Activated B cell treated with CpG ODN at 0.5 μM for 24 hours (primary cell): ENCODE measurements at regions of chr2 and their contacts with region 1.

Region 1: DNA sequence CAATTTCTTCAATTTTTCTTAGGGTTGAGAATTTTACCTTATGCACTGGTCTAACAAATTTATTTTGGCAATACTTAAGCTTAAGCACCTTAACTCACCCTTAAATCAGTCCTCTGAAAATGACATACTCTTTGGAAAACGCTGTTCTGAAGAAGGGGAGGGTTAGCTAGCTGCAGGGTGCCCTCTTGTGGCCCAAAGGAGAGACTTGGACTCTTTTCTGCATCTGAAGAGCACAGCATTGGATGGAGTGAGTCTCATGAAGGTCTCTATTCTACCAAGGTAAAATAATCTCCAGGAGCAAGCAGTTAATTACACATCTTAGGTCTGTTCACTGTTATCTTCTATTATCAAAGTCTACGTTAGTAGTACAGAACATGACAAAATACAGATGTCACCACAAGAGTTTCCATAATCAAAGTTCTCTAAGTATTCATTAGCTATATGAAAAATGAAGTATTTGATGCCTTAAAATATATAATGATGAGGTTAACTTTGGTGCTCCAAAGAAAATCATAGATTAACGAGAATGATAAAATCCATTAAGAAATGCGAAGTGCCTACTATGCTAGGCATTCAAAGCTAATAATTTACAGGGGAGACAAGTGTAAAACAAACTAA is 24.4 kb downstream of the PUM2 start:
- DNase-seq: no peak
- ATAC-seq: peak; percentile 66
- H3K4me3 Mint-ChIP-seq: no peak overlapping the region
- H3K27ac Mint-ChIP-seq: peak overlapping the region; percentile 19
- H3K4me1 Mint-ChIP-seq: peaks cover 63% of the 10 kb centered on the region
- H3K27me3 Mint-ChIP-seq: no peaks in the 10 kb centered on the region
- CTCF ChIP-seq: peak; percentile 25

Region 2: GRCh38 chr2:20304411-20304810 is 21.9 kb before region 1 on chr2:
- CTCF ChIA-PET with region 1: interaction called, 12 read pairs
- POLR2A ChIA-PET with region 1: no interaction called
- intact Hi-C with region 1: no loop called
- DNase-seq: no peak
- ATAC-seq: no peak
- H3K4me3 Mint-ChIP-seq: no peak overlapping the region
- H3K27ac Mint-ChIP-seq: no peak overlapping the region
- H3K4me1 Mint-ChIP-seq: no peaks in the 10 kb centered on the region
- H3K27me3 Mint-ChIP-seq: no peaks in the 10 kb centered on the region
- CTCF ChIP-seq: no peak

Region 3: GRCh38 chr2:20313659-20314058 is 12.6 kb before region 1 on chr2:
- CTCF ChIA-PET with region 1: interaction called, 8 read pairs
- POLR2A ChIA-PET with region 1: no interaction called
- intact Hi-C with region 1: loop called (anchors 2 kb)
- DNase-seq: no peak
- ATAC-seq: no peak
- H3K4me3 Mint-ChIP-seq: no peak overlapping the region
- H3K27ac Mint-ChIP-seq: no peak overlapping the region
- H3K4me1 Mint-ChIP-seq: peaks cover 6% of the 10 kb centered on the region
- H3K27me3 Mint-ChIP-seq: no peaks in the 10 kb centered on the region
- CTCF ChIP-seq: no peak

Region 4: DNA sequence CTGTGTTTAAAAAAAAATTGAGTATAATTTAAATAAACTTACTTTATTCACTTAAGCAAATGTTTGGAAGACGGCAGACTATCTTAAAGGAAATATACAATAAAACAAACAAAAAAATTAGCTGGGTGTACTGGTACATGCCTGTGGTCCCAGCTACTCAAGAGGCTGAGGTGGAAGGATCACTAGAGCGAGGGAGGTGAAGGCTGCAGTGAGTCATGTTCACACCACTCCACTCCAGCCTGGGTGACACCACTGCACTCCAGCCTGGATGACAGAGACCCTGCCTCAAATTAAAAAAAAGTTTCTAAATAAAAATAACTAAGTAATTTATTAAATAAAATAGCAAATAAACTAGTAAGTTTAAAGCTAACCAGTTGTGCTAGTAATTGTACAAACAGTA is 16.9 kb after region 1 on chr2:
- CTCF ChIA-PET with region 1: interaction called, 10 read pairs
- POLR2A ChIA-PET with region 1: no interaction called
- intact Hi-C with region 1: no loop called
- DNase-seq: no peak
- ATAC-seq: peak; percentile 56
- H3K4me3 Mint-ChIP-seq: no peak overlapping the region
- H3K27ac Mint-ChIP-seq: no peak overlapping the region
- H3K4me1 Mint-ChIP-seq: peaks cover 84% of the 10 kb centered on the region
- H3K27me3 Mint-ChIP-seq: no peaks in the 10 kb centered on the region
- CTCF ChIP-seq: no peak

Region 5: DNA sequence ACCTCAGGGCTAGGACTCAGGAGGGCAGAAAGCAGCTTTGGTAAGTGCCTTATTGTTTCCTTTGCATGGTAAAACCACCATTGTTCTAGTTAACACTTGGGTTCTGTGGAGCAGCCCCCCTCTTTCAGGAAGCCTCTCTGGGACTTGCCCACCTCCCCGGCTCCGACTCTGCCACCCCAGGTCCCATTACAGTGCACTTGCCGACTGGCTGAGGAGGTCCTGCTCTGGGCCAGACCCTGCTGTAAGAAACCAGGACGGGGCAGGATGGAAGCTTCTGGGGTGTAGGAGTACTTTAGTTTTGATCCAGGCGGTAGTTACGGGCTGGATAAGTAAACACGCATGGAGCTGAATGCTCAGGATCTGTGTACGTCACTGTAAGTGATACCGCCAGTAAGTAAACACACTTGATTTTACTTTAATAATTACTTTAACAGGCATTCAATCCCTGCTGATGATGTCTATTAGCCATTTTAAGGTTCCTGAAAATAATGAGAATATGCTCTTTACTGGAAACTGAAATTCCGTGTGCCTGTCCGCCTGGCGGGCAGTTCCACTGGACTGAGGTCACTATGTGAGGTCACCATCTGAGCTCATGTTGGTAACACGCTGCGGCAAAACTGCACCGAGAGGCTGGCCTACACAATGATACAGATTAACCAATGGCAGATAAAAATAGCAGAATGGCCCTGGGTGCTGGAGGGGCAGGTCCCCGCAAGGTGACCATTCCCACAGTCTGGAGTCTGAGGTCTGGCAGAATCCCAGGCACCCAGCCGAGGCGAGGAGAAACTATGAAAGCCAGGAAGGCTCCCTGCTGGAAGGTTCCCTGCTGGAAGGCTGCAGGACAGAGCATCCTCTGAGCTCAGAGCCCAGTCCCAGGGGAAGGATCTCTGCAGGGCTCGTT is 299.5 kb after region 1 on chr2:
- CTCF ChIA-PET with region 1: no interaction called
- POLR2A ChIA-PET with region 1: no interaction called
- intact Hi-C with region 1: no loop called
- DNase-seq: no peak
- ATAC-seq: no peak
- H3K4me3 Mint-ChIP-seq: no peak overlapping the region
- H3K27ac Mint-ChIP-seq: no peak overlapping the region
- H3K4me1 Mint-ChIP-seq: no peaks in the 10 kb centered on the region
- H3K27me3 Mint-ChIP-seq: no peaks in the 10 kb centered on the region
- CTCF ChIP-seq: no peak

Region 6: GRCh38 chr2:20642055-20642971 is 316.0 kb after region 1 on chr2:
- CTCF ChIA-PET with region 1: interaction called, 4 read pairs
- POLR2A ChIA-PET with region 1: no interaction called
- intact Hi-C with region 1: loop called (anchors 1 kb)
- DNase-seq: peak; percentile 73
- ATAC-seq: peak; percentile 100
- H3K4me3 Mint-ChIP-seq: no peak overlapping the region
- H3K27ac Mint-ChIP-seq: no peak overlapping the region
- H3K4me1 Mint-ChIP-seq: peaks cover 5% of the 10 kb centered on the region
- H3K27me3 Mint-ChIP-seq: no peaks in the 10 kb centered on the region
- CTCF ChIP-seq: peak; percentile 55